WTC11 (cell line): ENCODE measurements at regions of chr1 and their contacts with region 1.

Region 1: GRCh38 chr1:9724706-9725476 is 73.4 kb downstream of the PIK3CD start:
- DNase-seq: peak; percentile 80
- ATAC-seq: peak; percentile 78
- H3K4me3 Mint-ChIP-seq: no peak overlapping the region
- H3K27ac Mint-ChIP-seq: peak overlapping the region; percentile 32; the same call in 1 of the 2 replicates
- H3K4me1 Mint-ChIP-seq: peaks cover 8% of the 10 kb centered on the region
- H3K27me3 Mint-ChIP-seq: no peaks in the 10 kb centered on the region; the same call in 1 of the 2 replicates
- CTCF ChIP-seq: peak; percentile 92

Region 2: GRCh38 chr1:9569267-9569666 is 155.6 kb before region 1 on chr1:
- CTCF ChIA-PET with region 1: no interaction called
- POLR2A ChIA-PET with region 1: no interaction called
- DNase-seq: no peak
- ATAC-seq: no peak
- H3K4me3 Mint-ChIP-seq: no peak overlapping the region
- H3K27ac Mint-ChIP-seq: no peak overlapping the region
- H3K4me1 Mint-ChIP-seq: no peaks in the 10 kb centered on the region
- H3K27me3 Mint-ChIP-seq: no peaks in the 10 kb centered on the region
- CTCF ChIP-seq: no peak

Region 3: GRCh38 chr1:9603766-9604753 is 120.8 kb before region 1 on chr1:
- CTCF ChIA-PET with region 1: no interaction called
- POLR2A ChIA-PET with region 1: no interaction called
- DNase-seq: no peak
- ATAC-seq: no peak
- H3K4me3 Mint-ChIP-seq: no peak overlapping the region
- H3K27ac Mint-ChIP-seq: peak overlapping the region; percentile 68
- H3K4me1 Mint-ChIP-seq: no peaks in the 10 kb centered on the region
- H3K27me3 Mint-ChIP-seq: no peaks in the 10 kb centered on the region
- CTCF ChIP-seq: no peak

Region 4: DNA sequence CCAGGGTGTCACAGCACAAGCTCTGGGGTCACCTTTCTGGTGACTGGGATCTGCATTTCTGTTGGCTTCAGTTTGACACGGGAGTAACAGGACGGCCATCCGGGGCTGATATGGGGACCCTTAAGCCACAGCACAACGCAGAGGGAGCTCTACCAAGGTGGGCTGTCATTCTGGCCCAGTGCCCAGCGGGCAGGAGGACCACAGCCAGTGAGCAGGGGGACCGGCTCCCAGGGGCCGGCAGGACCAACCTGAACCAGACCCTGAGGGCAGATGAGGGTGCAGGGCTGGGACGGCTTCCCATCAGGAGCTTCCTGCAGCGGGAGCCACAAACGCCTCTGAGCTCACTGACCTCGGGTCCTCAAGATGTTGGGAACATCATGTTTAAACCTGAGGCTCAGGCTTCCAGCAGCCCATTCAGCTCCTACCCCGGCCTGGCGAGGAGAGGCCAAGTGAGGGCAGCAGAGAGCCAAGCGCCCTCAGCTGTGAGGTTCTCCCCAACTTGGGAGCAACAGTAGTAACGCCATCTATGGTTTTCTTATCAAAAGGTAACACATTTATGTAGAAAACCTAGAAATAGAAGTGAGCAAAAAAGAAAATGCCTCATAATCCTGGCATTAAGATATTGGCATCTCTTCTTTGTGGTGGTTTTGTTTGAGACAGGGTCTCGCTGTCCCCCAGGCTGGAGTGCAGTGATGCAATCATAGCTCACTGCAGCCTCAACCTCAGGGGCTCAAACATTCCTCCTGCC is 109.4 kb before region 1 on chr1:
- CTCF ChIA-PET with region 1: interaction called, 60 read pairs
- POLR2A ChIA-PET with region 1: interaction called, 4 read pairs
- DNase-seq: peak; percentile 85
- ATAC-seq: peak; percentile 96
- H3K4me3 Mint-ChIP-seq: no peak overlapping the region
- H3K27ac Mint-ChIP-seq: 0 out of 2 replicates have a peak overlapping the region, but pooled peaks have one; percentile 60
- H3K4me1 Mint-ChIP-seq: peaks cover 2% of the 10 kb centered on the region; the same call in 1 of the 2 replicates
- H3K27me3 Mint-ChIP-seq: no peaks in the 10 kb centered on the region
- CTCF ChIP-seq: peak; percentile 52

Region 5: GRCh38 chr1:9651565-9652378 is 73.1 kb before region 1 on chr1 and contains the start of gene PIK3CD:
- CTCF ChIA-PET with region 1: interaction called, 17 read pairs
- POLR2A ChIA-PET with region 1: no interaction called
- DNase-seq: peak; percentile 70
- ATAC-seq: peak; percentile 83
- H3K4me3 Mint-ChIP-seq: peak within 1 kb of the TSS; percentile 72
- H3K27ac Mint-ChIP-seq: no peak within 1 kb of the TSS
- H3K4me1 Mint-ChIP-seq: peaks cover 4% of the 10 kb centered on the region; the same call in 1 of the 2 replicates
- H3K27me3 Mint-ChIP-seq: peaks cover 58% of the 10 kb centered on the region
- CTCF ChIP-seq: no peak
- total RNA-seq, gene PIK3CD: 17.9 to 23.1 TPM (median 20.2 TPM) in 3 replicates

Region 6: GRCh38 chr1:9711466-9712020 is 13.3 kb before region 1 on chr1:
- CTCF ChIA-PET with region 1: interaction called, 25 read pairs
- POLR2A ChIA-PET with region 1: no interaction called
- DNase-seq: no peak
- ATAC-seq: no peak
- H3K4me3 Mint-ChIP-seq: no peak overlapping the region
- H3K27ac Mint-ChIP-seq: no peak overlapping the region
- H3K4me1 Mint-ChIP-seq: peaks cover 25% of the 10 kb centered on the region
- H3K27me3 Mint-ChIP-seq: no peaks in the 10 kb centered on the region
- CTCF ChIP-seq: no peak

Region 7: DNA sequence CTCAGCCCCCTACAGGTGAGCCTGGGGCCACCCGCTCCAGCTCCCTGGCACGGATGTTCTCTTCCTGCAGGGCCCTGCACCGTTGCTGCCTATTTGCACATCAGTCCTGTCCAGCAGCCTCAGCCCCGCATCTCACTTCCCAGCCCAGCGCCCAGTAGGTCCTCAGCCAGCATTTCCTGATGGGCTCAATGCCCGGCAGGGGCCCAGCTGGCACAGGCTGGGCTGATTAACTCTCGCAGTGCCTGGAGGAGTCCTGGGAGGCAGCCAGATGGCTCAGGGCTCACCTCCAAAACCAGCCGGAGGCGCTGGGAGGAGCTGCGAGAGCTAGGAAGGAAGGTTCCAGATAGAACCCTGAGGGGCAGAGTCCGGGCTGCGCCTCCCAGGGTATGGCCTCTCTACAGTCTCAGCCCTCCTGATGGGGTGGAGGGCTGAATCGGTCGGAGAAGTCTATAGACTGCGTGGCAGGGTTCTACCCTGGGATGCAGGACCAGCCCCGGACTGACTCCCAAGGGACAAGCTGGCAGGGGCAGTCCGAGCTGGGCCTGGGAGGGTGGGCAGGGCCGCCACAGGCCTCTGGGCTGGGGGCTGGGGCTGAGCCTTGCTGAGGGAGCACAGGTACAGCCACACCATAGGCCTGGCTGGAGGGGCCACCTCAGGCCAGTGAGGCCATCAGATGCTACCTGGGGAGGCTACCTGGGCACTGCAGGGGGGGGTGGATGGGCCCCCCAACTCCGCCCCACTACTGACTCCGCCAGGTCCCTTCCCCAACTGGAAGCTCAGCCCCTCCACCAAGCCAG is 118.1 kb after region 1 on chr1:
- CTCF ChIA-PET with region 1: interaction called, 10 read pairs
- POLR2A ChIA-PET with region 1: interaction called, 3 read pairs
- DNase-seq: no peak
- ATAC-seq: peak; percentile 46
- H3K4me3 Mint-ChIP-seq: no peak overlapping the region
- H3K27ac Mint-ChIP-seq: no peak overlapping the region
- H3K4me1 Mint-ChIP-seq: peaks cover 18% of the 10 kb centered on the region
- H3K27me3 Mint-ChIP-seq: no peaks in the 10 kb centered on the region; the same call in 1 of the 2 replicates
- CTCF ChIP-seq: no peak

Region 8: DNA sequence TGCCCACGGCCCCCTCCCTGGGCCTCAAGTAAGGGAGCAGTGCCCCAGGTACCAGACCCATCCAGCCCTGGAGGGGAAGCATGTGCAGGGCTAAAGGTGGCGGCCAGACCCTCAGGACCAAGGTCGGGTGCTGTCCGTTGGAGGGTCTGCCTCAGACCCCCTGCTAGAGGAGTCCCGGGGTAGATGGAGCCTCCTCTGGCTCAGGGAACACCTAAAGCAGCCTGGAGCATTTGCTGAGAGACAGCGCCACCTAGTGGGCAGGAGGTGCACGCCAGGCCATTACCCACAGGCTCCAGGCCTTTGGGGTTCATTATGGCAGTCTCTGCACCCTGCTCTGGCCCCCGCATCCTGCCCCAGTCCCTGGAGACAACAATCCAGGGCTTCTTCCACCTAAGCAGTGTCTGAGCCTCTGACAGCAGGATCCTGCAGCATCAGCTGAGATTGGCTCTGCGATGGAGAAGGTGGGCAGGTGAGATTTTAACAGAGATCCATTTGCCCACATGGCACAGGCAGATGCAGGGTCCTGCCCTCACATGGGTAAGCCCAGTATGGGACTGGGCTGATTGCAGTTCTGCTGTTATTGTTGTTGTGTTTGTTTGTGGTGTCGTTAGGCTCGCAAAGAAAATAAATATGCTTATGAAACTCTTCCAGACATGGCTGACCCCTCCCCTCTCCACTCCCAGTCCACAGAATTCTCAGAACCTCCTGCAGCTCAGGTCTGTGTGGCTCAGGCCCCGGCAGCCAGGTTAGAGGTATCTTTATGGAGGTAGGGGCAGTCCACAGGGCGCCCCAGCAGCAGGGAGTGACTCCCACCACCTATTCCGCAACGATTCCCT is 142.7 kb after region 1 on chr1:
- CTCF ChIA-PET with region 1: interaction called, 44 read pairs
- POLR2A ChIA-PET with region 1: no interaction called
- DNase-seq: peak; percentile 93
- ATAC-seq: peak; percentile 90
- H3K4me3 Mint-ChIP-seq: no peak overlapping the region
- H3K27ac Mint-ChIP-seq: no peak overlapping the region
- H3K4me1 Mint-ChIP-seq: peaks cover 8% of the 10 kb centered on the region
- H3K27me3 Mint-ChIP-seq: no peaks in the 10 kb centered on the region
- CTCF ChIP-seq: peak; percentile 99